ENCODE measurements at regions of chr12 and their contacts with region 1.

Region 1: DNA sequence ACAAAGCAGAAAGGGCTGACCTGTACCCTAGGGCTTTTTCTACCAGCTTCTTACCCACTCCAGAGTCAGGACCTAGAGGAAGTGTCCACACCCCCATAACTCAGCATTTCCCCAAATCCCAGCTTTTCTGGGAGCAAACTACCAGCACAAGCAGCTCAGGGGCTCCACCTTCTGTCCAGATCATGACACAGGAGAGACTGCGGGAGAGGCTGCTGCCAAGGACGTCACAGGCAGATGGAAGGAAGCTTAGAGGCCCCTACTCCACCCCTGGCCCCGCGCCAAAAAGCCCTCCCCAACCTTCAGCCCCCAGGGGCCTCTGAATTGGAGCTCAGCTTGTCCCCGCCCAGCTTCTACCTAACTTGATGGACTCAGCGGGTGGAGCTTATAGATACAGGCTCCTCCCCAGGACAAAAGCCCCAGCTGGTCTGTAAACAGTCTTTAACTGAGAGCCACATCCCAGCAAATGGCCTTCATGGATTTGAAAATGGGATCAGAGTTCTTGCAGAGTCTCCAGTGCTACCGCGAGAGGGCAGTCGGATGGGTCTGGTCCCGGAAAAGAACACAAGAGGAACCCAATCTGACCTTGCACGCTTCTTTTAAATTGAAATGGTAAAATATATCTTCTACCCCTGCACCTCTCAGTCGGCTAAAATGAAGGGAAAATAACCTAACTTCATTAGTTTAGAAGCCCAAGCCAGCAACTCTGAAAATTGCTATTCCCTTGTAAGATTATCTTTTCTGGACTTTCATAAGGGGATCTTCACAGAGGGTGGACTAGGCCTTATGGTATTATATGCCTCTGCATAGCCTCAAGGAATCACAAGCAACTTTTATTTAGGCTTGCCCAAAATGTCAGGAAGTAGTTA is 6.8 kb upstream of the BAZ2A start:
- DNase-seq: peak; percentile 95
- ATAC-seq: peak; percentile 60
- H3K4me3 Mint-ChIP-seq: peak overlapping the region; percentile 88
- H3K27ac Mint-ChIP-seq: peak overlapping the region; percentile 93
- H3K4me1 Mint-ChIP-seq: peaks cover 63% of the 10 kb centered on the region
- H3K27me3 Mint-ChIP-seq: no peaks in the 10 kb centered on the region

Region 2: GRCh38 chr12:56359851-56360767 is 276.8 kb before region 1 on chr12 and contains the start of gene STAT2:
- CTCF ChIA-PET with region 1: interaction called, 11 read pairs
- POLR2A ChIA-PET with region 1: interaction called, 3 read pairs
- DNase-seq: peak; percentile 100
- ATAC-seq: peak; percentile 98
- H3K4me3 Mint-ChIP-seq: peak within 1 kb of the TSS; percentile 93
- H3K27ac Mint-ChIP-seq: peak within 1 kb of the TSS; percentile 97
- H3K4me1 Mint-ChIP-seq: peaks cover 25% of the 10 kb centered on the region
- H3K27me3 Mint-ChIP-seq: no peaks in the 10 kb centered on the region
- total RNA-seq, gene STAT2: 193 to 194 TPM

Region 3: GRCh38 chr12:56593909-56594621 is 42.8 kb before region 1 on chr12:
- CTCF ChIA-PET with region 1: interaction called, 34 read pairs
- POLR2A ChIA-PET with region 1: no interaction called
- DNase-seq: peak; percentile 77
- ATAC-seq: peak; percentile 64
- H3K4me3 Mint-ChIP-seq: no peak overlapping the region
- H3K27ac Mint-ChIP-seq: no peak overlapping the region
- H3K4me1 Mint-ChIP-seq: peaks cover 5% of the 10 kb centered on the region
- H3K27me3 Mint-ChIP-seq: no peaks in the 10 kb centered on the region

Region 4: GRCh38 chr12:56614627-56615026 is 22.3 kb before region 1 on chr12:
- CTCF ChIA-PET with region 1: interaction called, 47 read pairs
- POLR2A ChIA-PET with region 1: interaction called, 4 read pairs
- DNase-seq: no peak
- ATAC-seq: no peak
- H3K4me3 Mint-ChIP-seq: no peak overlapping the region
- H3K27ac Mint-ChIP-seq: no peak overlapping the region
- H3K4me1 Mint-ChIP-seq: no peaks in the 10 kb centered on the region
- H3K27me3 Mint-ChIP-seq: no peaks in the 10 kb centered on the region

Region 5: GRCh38 chr12:56688129-56688845 is 51.4 kb after region 1 on chr12 and contains the start of gene PTGES3:
- CTCF ChIA-PET with region 1: interaction called, 33 read pairs
- POLR2A ChIA-PET with region 1: interaction called, 22 read pairs
- DNase-seq: peak; percentile 99
- ATAC-seq: peak; percentile 76
- H3K4me3 Mint-ChIP-seq: peak within 1 kb of the TSS; percentile 99
- H3K27ac Mint-ChIP-seq: peak within 1 kb of the TSS; percentile 99
- H3K4me1 Mint-ChIP-seq: peaks cover 17% of the 10 kb centered on the region
- H3K27me3 Mint-ChIP-seq: no peaks in the 10 kb centered on the region
- total RNA-seq, gene PTGES3: 273 to 290 TPM

Measured in activated CD8-positive, alpha-beta T cell treated with anti-CD3 and anti-CD28 coated beads, Interleukin-2, amount 10 ng/mL, durations not matched to agents 7 days and 5 days (primary cell).